Activated T-helper 2 cell treated with anti-CD3 and anti-CD28 coated beads, Interferon-gamma antibody, Interleukin-2, Interleukin-4, amounts not matched to agents 10 μg/mL and 5 μg/mL and 100 μg/mL, durations not matched to agents 14 hours and 24 hours and 36 hours (primary cell): ENCODE measurements at regions of chr9 and their contacts with region 1.

Region 1: DNA sequence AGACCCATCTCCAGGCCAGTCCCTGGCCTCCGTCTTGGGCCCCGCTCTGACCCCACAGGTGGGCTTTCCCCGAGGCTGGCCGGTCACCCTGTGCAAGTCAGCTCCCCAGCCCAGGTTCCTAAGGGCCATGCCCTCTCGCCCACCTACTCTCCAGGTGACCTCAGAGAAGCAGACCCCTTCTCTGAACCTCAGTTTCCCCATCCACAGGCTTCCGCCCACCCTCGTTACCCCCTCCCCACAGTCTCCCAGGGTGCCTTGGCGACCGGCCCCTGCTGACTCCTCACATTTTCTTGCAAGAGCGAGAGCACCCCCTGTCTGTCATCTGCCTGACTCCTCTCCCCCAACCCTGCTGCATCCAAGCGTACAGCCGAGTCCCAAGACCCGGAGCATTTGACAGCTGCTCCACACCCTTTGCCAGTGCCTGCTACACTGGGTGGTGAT is 51.2 kb upstream of the ORM1 start:
- DNase-seq: no peak
- H3K4me3 Mint-ChIP-seq: no peak overlapping the region
- H3K27ac Mint-ChIP-seq: no peak overlapping the region
- H3K4me1 Mint-ChIP-seq: no peaks in the 10 kb centered on the region
- H3K27me3 Mint-ChIP-seq: no peaks in the 10 kb centered on the region

Region 2: GRCh38 chr9:113255438-113255837 is 1016.2 kb before region 1 on chr9:
- intact Hi-C with region 1: no loop called
- DNase-seq: no peak
- H3K4me3 Mint-ChIP-seq: no peak overlapping the region
- H3K27ac Mint-ChIP-seq: no peak overlapping the region
- H3K4me1 Mint-ChIP-seq: no peaks in the 10 kb centered on the region
- H3K27me3 Mint-ChIP-seq: no peaks in the 10 kb centered on the region

Region 3: DNA sequence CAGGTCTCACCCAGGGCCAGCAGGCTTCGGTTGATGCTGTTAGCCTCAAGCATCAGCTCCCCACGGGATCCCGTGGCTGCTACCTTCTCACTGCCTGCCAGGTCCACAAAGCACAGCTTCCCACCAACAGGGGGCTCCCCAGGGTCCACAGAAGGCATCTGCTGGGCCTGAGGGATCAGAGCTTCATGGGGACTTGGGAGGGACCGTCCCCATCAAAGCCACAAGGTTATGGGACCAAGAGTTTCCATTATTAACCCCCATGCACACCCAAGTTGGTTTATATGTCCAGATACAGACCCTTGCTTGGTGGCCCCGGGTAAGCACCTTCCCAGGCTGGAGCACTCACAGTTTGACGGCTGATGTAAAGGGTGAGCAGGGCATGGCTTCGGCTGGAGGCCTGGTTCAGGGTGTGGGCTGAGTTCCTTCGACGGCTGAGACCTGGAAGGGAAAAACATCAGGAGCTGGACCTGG is 175.6 kb before region 1 on chr9:
- intact Hi-C with region 1: no loop called
- DNase-seq: no peak
- H3K4me3 Mint-ChIP-seq: no peak overlapping the region
- H3K27ac Mint-ChIP-seq: no peak overlapping the region
- H3K4me1 Mint-ChIP-seq: peaks cover 3% of the 10 kb centered on the region
- H3K27me3 Mint-ChIP-seq: peaks cover 23% of the 10 kb centered on the region

Region 4: GRCh38 chr9:114155263-114155972 is 116.2 kb before region 1 on chr9 and contains the start of gene COL27A1:
- intact Hi-C with region 1: loop called (anchors 5 kb)
- DNase-seq: peak; percentile 69
- H3K4me3 Mint-ChIP-seq: peak within 1 kb of the TSS; percentile 86
- H3K27ac Mint-ChIP-seq: peak within 1 kb of the TSS; percentile 74
- H3K4me1 Mint-ChIP-seq: peaks cover 11% of the 10 kb centered on the region
- H3K27me3 Mint-ChIP-seq: peaks cover 44% of the 10 kb centered on the region
- total RNA-seq, gene COL27A1: 3.7 and 4.1 TPM in 2 replicates

Region 5: GRCh38 chr9:114348906-114349482 is 77.3 kb after region 1 on chr9:
- intact Hi-C with region 1: no loop called
- DNase-seq: peak; percentile 50
- H3K4me3 Mint-ChIP-seq: peak overlapping the region; percentile 5
- H3K27ac Mint-ChIP-seq: peak overlapping the region; percentile 93
- H3K4me1 Mint-ChIP-seq: peaks cover 44% of the 10 kb centered on the region
- H3K27me3 Mint-ChIP-seq: no peaks in the 10 kb centered on the region